ENCODE measurements at regions of chr16 and their contacts with region 1.

Region 1: DNA sequence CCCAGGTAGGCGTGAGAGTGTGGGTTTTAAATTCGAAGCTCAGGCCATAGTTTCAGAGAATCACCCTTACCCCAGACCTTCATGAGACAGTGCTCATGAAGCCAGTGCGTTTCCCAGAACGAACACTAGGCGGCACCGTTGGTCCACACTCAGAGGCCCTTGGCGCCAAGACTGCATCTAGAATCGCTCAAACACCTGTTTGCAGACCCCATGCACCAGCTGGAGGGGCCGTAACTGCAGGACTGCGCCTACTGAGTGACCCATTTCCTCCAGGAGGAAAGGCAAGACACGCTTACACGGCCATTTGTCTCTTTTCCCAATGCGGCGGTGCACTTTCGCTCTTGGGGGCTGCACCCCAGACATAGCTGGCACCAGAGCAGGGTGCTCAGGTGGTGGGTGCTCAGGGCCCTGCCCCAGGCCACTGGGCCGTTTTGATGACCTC is 34.0 kb downstream of the ADGRG5 start:
- DNase-seq: peak; percentile 55 to 83 (median 72)
- ATAC-seq: peak; percentile 87
- H3K4me3 ChIP-seq: no peak overlapping the region
- H3K4me3 Mint-ChIP-seq: no peak overlapping the region
- H3K27ac ChIP-seq: no peak overlapping the region
- H3K27ac Mint-ChIP-seq: peak overlapping the region in 1 of 9 donors; percentile 96
- H3K4me1 ChIP-seq: peaks cover 0 to 44% of the 10 kb centered on the region in 2 donors
- H3K4me1 Mint-ChIP-seq: peaks cover 0 to 45% (median 6%) of the 10 kb centered on the region in 7 donors
- H3K27me3 ChIP-seq: no peaks in the 10 kb centered on the region
- H3K27me3 Mint-ChIP-seq: peaks cover 0 to 6% (median 4%) of the 10 kb centered on the region in 5 donors

Region 2: DNA sequence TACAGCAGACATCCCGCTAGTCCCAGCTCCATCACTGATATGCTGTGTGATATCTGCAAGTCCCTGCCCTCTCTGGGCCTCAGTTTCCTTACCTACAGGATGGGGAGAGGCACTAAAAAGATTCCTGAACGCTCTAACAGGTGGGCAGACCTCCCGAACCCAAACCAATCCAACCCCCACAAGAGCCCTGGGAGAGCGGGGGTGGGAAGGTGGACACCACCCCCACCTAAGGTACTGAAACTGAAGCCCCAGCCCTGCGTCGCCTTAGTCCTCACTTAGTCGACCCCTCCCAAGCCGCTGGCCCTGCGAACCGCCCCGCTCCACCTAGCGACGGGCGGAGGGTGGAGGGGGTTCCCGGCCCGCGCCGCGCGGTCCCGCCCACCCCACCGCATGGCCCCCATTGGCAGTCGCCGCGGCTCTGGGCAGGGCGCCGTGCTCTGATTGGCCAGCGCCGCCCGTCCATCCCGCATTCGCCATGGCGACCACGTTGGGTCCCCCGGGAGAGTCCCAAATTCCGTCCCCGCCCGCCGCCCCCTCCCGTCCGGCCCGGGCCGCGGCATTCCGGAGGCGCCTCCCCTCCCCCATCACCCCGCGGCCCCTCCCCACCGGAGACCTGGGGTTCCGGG is 40.7 kb before region 1 on chr16:
- CTCF ChIA-PET with region 1: interaction called, 5 read pairs
- POLR2A ChIA-PET with region 1: interaction called, 4 read pairs
- intact Hi-C with region 1: loop called in 1 of 2 experiments (anchors 2 kb)
- DNase-seq: peak; percentile 77 to 94 (median 87)
- ATAC-seq: peak; percentile 95
- H3K4me3 ChIP-seq: peak overlapping the region; percentile 44
- H3K4me3 Mint-ChIP-seq: peak overlapping the region; percentile 77 to 89 (median 82)
- H3K27ac ChIP-seq: peak overlapping the region; percentile 93
- H3K27ac Mint-ChIP-seq: peak overlapping the region; percentile 82 to 96 (median 94)
- H3K4me1 ChIP-seq: peaks cover 54 to 60% of the 10 kb centered on the region in 2 donors
- H3K4me1 Mint-ChIP-seq: peaks cover 57 to 79% (median 74%) of the 10 kb centered on the region in 7 donors
- H3K27me3 ChIP-seq: no peaks in the 10 kb centered on the region
- H3K27me3 Mint-ChIP-seq: no peaks in the 10 kb centered on the region

Region 3: GRCh38 chr16:57609541-57610401 is 33.3 kb after region 1 on chr16:
- CTCF ChIA-PET with region 1: no interaction called
- POLR2A ChIA-PET with region 1: no interaction called
- intact Hi-C with region 1: loop called in 1 of 2 experiments (anchors 1 kb)
- DNase-seq: peak in 7 of 9 donors; percentile 29 to 74 (median 35)
- ATAC-seq: peak; percentile 91
- H3K4me3 ChIP-seq: peak overlapping the region; percentile 38
- H3K4me3 Mint-ChIP-seq: peak overlapping the region; percentile 38 to 84 (median 62)
- H3K27ac ChIP-seq: no peak overlapping the region
- H3K27ac Mint-ChIP-seq: peak overlapping the region in 8 of 9 donors; percentile 20 to 91 (median 52)
- H3K4me1 ChIP-seq: peaks cover 10 to 42% of the 10 kb centered on the region in 2 donors
- H3K4me1 Mint-ChIP-seq: peaks cover 11 to 47% (median 13%) of the 10 kb centered on the region in 7 donors
- H3K27me3 ChIP-seq: no peaks in the 10 kb centered on the region
- H3K27me3 Mint-ChIP-seq: no peaks in the 10 kb centered on the region

Region 4: DNA sequence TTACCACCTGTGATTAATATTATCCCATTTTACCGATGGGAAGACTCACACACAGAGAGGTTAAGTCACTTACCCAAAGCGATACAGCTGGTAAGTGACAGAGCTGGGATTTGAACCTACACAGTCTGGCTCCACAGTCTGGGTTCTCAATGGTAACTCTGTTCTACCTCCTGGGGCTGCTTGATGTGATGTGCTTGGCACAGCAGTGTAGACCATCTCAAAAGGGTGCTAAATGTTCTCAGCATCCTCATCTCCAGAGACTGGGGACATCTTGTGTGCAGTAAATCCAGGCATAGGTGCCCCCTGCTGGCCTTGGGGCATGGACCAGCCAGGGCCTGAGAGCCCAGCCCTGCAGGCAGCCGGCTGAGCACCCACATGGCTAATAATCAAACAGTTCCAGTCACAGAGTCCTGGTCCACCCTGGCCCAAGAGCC is 143.7 kb after region 1 on chr16:
- CTCF ChIA-PET with region 1: no interaction called
- POLR2A ChIA-PET with region 1: no interaction called
- intact Hi-C with region 1: loop called (anchors 1 kb)
- DNase-seq: peak in 5 of 9 donors; percentile 21 to 40 (median 25)
- ATAC-seq: peak; percentile 75
- H3K4me3 ChIP-seq: no peak overlapping the region
- H3K4me3 Mint-ChIP-seq: no peak overlapping the region
- H3K27ac ChIP-seq: no peak overlapping the region
- H3K27ac Mint-ChIP-seq: no peak overlapping the region
- H3K4me1 ChIP-seq: no peaks in the 10 kb centered on the region
- H3K4me1 Mint-ChIP-seq: no peaks in the 10 kb centered on the region
- H3K27me3 ChIP-seq: no peaks in the 10 kb centered on the region
- H3K27me3 Mint-ChIP-seq: peaks cover 0 to 2% (median 0%) of the 10 kb centered on the region in 5 donors

Region 5: DNA sequence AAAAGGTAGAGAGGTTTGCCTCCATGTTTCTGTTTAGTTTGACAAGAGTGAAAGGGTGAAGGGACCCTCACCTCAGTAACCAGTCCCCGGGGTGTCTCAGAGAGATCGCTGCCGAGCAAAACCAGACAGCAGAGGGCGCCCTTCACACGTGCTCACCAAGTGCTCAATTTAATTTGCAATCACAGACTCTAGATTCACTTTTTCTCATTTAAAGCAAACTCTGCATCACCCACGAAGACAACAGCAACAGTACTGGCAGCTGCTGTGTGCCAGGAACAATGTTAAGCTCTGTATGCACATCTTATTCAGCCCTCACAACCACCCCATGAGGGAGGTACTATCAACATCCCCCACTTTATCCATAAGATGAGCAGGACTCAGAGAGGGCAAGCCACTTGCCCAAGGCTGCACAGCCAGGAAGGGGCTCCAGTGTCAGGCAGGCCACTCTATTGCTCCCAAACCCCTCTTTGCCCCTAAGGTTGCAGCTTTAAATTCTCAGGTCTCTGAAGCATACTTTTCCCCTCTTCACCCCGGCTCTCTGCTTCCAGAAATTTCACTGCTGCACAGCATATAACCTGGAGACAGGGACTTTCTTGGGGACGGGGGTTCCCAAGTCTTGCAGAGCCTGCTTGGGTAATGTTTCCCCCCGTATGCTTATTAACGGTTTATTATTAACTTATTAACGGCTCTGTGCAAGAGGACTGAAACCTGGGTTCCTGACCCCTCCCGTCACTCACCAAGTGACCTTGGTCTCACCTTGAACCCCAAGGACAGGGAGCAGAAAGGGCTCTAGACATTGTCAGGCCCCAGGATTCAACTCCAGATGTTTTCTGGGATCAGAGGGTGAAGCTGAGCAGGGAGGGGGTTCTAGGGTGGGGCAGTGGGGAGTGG is 323.6 kb after region 1 on chr16:
- CTCF ChIA-PET with region 1: no interaction called
- POLR2A ChIA-PET with region 1: no interaction called
- intact Hi-C with region 1: loop called (anchors 10 kb)
- DNase-seq: peak; percentile 55 to 81 (median 71)
- ATAC-seq: peak; percentile 86
- H3K4me3 ChIP-seq: no peak overlapping the region
- H3K4me3 Mint-ChIP-seq: no peak overlapping the region
- H3K27ac ChIP-seq: no peak overlapping the region
- H3K27ac Mint-ChIP-seq: peak overlapping the region in 1 of 9 donors; percentile 1
- H3K4me1 ChIP-seq: no peaks in the 10 kb centered on the region
- H3K4me1 Mint-ChIP-seq: peaks cover under 1 to 6% (median 3%) of the 10 kb centered on the region in 7 donors
- H3K27me3 ChIP-seq: no peaks in the 10 kb centered on the region
- H3K27me3 Mint-ChIP-seq: peaks cover 4 to 11% (median 8%) of the 10 kb centered on the region in 5 donors